ENCODE measurements at regions of chr17 and their contacts with region 1.

Region 1: GRCh38 chr17:59106463-59107305 is at the start of gene TRIM37:
- DNase-seq: peak; percentile 97 to 100 (median 98)
- ATAC-seq: peak; percentile 96
- H3K4me3 ChIP-seq: peak within 1 kb of the TSS; percentile 89 to 93
- H3K4me3 Mint-ChIP-seq: peak within 1 kb of the TSS; percentile 92
- H3K27ac ChIP-seq: peak within 1 kb of the TSS; percentile 87 to 88
- H3K27ac Mint-ChIP-seq: peak within 1 kb of the TSS; percentile 91
- H3K4me1 ChIP-seq: peaks cover 26% of the 10 kb centered on the region
- H3K4me1 Mint-ChIP-seq: peaks cover 38% of the 10 kb centered on the region
- H3K27me3 ChIP-seq: no peaks in the 10 kb centered on the region
- H3K27me3 Mint-ChIP-seq: no peaks in the 10 kb centered on the region
- CTCF ChIP-seq: no peak
- total RNA-seq, gene TRIM37: 17.7 to 20.9 TPM

Region 2: DNA sequence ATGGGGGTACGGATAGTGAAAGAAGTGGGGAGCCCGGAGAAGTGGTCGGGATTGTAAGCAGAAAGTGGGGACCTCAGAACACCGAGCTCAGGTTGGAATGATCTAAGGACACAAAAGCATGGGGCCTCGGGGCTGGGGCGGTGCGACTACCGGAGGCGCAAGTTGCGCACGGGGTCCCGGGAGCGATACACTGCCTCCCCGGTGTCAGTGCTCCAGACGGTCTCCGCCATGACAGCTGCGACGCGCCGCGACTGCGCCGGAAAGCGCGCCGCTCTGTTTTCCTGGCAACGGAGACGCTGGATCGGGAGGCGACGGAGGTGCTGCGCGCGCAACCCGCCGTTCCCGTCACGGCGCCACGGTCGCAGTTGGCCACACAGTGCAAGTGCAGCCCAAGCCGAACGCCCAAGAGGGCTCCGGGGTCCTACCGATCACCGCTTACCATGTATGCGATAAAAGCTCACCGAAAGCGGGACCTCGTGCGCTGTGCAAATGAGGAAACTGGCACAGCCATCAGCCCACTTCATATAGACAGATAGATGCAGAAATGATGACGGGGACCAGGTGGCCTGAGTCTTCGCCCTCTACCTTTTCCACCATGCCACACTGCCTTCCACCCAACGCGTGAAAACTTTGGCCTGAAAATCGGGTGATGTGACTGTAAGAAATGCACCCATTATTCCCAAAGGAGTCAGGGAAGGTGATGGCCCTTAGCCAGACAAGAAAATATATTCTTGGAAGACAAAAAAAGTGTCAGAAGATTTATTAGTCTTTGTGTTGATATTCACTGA is 887.5 kb before region 1 on chr17 and contains the start of gene MKS1:
- CTCF ChIA-PET with region 1: no interaction called
- POLR2A ChIA-PET with region 1: no interaction called
- intact Hi-C with region 1: loop called in 1 of 2 experiments (anchors 2 kb)
- DNase-seq: peak; percentile 92 to 97 (median 95)
- ATAC-seq: peak; percentile 97
- H3K4me3 ChIP-seq: peak within 1 kb of the TSS; percentile 63 to 91
- H3K4me3 Mint-ChIP-seq: peak within 1 kb of the TSS; percentile 87
- H3K27ac ChIP-seq: peak within 1 kb of the TSS; percentile 82 to 90
- H3K27ac Mint-ChIP-seq: peak within 1 kb of the TSS; percentile 93
- H3K4me1 ChIP-seq: peaks cover 14% of the 10 kb centered on the region
- H3K4me1 Mint-ChIP-seq: peaks cover 23% of the 10 kb centered on the region
- H3K27me3 ChIP-seq: no peaks in the 10 kb centered on the region
- H3K27me3 Mint-ChIP-seq: peaks cover 2% of the 10 kb centered on the region
- CTCF ChIP-seq: peak; percentile 67
- total RNA-seq, gene MKS1: 4.6 to 4.9 TPM

Region 3: DNA sequence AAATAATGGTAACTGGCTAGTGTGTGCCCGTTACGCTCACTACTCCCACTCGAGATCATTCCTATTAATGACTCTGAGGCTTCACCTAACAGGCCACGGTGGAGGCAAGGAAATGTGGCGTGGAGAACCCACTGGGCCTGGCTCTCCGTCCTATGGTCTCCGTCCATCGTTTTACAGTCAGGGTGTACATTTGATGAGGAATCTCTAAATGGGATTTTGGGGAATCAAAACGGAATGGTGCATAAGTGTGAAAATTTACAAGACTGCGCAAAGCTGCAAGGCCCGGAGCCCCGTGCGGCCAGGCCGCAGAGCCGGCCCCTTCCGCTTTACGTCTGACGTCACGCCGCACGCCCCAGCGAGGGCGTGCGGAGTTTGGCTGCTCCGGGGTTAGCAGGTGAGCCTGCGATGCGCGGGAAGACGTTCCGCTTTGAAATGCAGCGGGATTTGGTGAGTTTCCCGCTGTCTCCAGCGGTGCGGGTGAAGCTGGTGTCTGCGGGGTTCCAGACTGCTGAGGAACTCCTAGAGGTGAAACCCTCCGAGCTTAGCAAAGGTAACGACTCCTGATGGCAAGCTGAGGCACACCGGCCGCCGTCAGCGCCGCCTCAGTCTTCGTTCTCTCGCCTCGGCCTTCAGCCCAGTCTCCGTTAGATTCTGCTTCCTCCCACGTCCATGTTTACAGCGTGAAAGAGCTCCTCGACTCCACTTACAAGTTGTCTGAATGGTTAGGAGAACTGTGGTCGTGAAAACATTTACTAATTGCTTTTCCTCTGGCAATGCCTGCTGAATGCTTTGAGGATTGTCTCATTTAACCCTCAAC is 414.2 kb before region 1 on chr17 and contains the start of gene RAD51C:
- CTCF ChIA-PET with region 1: no interaction called
- POLR2A ChIA-PET with region 1: no interaction called
- intact Hi-C with region 1: loop called in 1 of 2 experiments (anchors 10 kb)
- DNase-seq: peak; percentile 67 to 93 (median 85)
- ATAC-seq: peak; percentile 98
- H3K4me3 ChIP-seq: peak within 1 kb of the TSS; percentile 72 to 86
- H3K4me3 Mint-ChIP-seq: peak within 1 kb of the TSS; percentile 91
- H3K27ac ChIP-seq: peak within 1 kb of the TSS; percentile 66 to 82
- H3K27ac Mint-ChIP-seq: peak within 1 kb of the TSS; percentile 89
- H3K4me1 ChIP-seq: peaks cover 17% of the 10 kb centered on the region
- H3K4me1 Mint-ChIP-seq: peaks cover 29% of the 10 kb centered on the region
- H3K27me3 ChIP-seq: no peaks in the 10 kb centered on the region
- H3K27me3 Mint-ChIP-seq: no peaks in the 10 kb centered on the region
- CTCF ChIP-seq: no peak
- total RNA-seq, gene RAD51C: 10.0 to 10.7 TPM

Region 4: GRCh38 chr17:58899065-58899590 is 207.6 kb before region 1 on chr17:
- CTCF ChIA-PET with region 1: no interaction called
- POLR2A ChIA-PET with region 1: no interaction called
- intact Hi-C with region 1: no loop called
- DNase-seq: no peak
- ATAC-seq: no peak
- H3K4me3 ChIP-seq: no peak overlapping the region
- H3K4me3 Mint-ChIP-seq: no peak overlapping the region
- H3K27ac ChIP-seq: no peak overlapping the region
- H3K27ac Mint-ChIP-seq: no peak overlapping the region
- H3K4me1 ChIP-seq: no peaks in the 10 kb centered on the region
- H3K4me1 Mint-ChIP-seq: no peaks in the 10 kb centered on the region
- H3K27me3 ChIP-seq: no peaks in the 10 kb centered on the region
- H3K27me3 Mint-ChIP-seq: peaks cover 18% of the 10 kb centered on the region
- CTCF ChIP-seq: no peak

Region 5: DNA sequence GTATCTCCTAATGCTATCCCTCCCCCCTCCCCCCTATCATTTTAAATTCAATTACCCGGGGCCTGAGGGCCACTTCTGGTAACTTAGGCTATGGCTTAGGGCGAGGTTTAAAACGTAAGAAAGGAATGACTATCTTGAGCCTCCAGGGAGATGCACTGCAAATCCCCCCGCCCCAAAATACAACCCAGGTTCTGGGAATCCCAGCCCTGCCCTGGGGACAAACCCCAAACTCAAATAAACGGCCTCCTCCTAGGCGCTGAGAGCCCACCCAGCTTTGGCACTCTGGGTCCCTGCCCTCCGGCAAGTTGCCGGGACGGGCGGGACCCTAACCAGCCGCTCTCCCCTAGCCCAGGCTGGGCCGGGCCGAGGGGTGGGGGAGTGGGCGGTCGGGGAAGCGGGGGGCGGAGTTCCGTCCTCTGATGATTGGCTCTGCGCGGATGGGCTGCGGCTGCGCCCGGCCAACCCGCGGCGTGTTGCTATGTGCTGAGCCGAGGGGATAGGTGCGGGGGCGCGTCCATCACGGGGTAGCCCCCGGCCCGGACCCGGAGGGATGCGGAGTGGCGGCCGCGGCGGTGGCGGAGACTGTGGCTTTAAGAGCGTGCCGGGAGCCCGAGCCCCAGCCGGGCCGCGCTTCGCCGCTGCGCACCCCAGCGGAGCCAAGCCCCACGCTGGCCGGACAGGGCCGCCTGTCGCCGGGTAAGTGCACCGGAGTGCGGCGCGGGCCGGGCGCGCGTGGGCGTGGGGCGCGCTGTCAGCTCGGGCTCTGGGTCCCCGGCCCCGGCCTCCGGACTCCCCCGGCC is 224.6 kb after region 1 on chr17 and contains the start of gene YPEL2:
- CTCF ChIA-PET with region 1: no interaction called
- POLR2A ChIA-PET with region 1: no interaction called
- intact Hi-C with region 1: loop called in 1 of 2 experiments (anchors 1 kb)
- DNase-seq: peak; percentile 68 to 94 (median 91)
- ATAC-seq: peak; percentile 85
- H3K4me3 ChIP-seq: peak within 1 kb of the TSS; percentile 49 to 86
- H3K4me3 Mint-ChIP-seq: peak within 1 kb of the TSS; percentile 94
- H3K27ac ChIP-seq: peak within 1 kb of the TSS; percentile 44 to 52
- H3K27ac Mint-ChIP-seq: peak within 1 kb of the TSS; percentile 94
- H3K4me1 ChIP-seq: peaks cover 64% of the 10 kb centered on the region
- H3K4me1 Mint-ChIP-seq: peaks cover 81% of the 10 kb centered on the region
- H3K27me3 ChIP-seq: no peaks in the 10 kb centered on the region
- H3K27me3 Mint-ChIP-seq: no peaks in the 10 kb centered on the region
- CTCF ChIP-seq: no peak
- total RNA-seq, gene YPEL2: 48.7 to 54.4 TPM

Region 6: GRCh38 chr17:59707114-59707970 is 600.7 kb after region 1 on chr17 and contains the starts of genes PTRH2 and VMP1:
- CTCF ChIA-PET with region 1: no interaction called
- POLR2A ChIA-PET with region 1: no interaction called
- intact Hi-C with region 1: loop called in 1 of 2 experiments (anchors 2 kb)
- DNase-seq: peak; percentile 72 to 97 (median 87)
- ATAC-seq: peak; percentile 93
- H3K4me3 ChIP-seq: peak within 1 kb of the TSS; percentile 72 to 80
- H3K4me3 Mint-ChIP-seq: peak within 1 kb of the TSS; percentile 95
- H3K27ac ChIP-seq: peak within 1 kb of the TSS; percentile 80 to 94
- H3K27ac Mint-ChIP-seq: peak within 1 kb of the TSS; percentile 97
- H3K4me1 ChIP-seq: peaks cover 36% of the 10 kb centered on the region
- H3K4me1 Mint-ChIP-seq: peaks cover 63% of the 10 kb centered on the region
- H3K27me3 ChIP-seq: no peaks in the 10 kb centered on the region
- H3K27me3 Mint-ChIP-seq: no peaks in the 10 kb centered on the region
- CTCF ChIP-seq: no peak
- total RNA-seq, gene PTRH2: 6.1 to 7.6 TPM
- total RNA-seq, gene VMP1: 56.8 to 66.2 TPM

Region 7: GRCh38 chr17:60599620-60600489 is 1493.2 kb after region 1 on chr17 and contains the start of gene PPM1D:
- CTCF ChIA-PET with region 1: no interaction called
- POLR2A ChIA-PET with region 1: no interaction called
- intact Hi-C with region 1: loop called in 1 of 2 experiments (anchors 5 kb)
- DNase-seq: peak; percentile 92 to 99 (median 98)
- ATAC-seq: peak; percentile 93
- H3K4me3 ChIP-seq: peak within 1 kb of the TSS; percentile 84 to 97
- H3K4me3 Mint-ChIP-seq: peak within 1 kb of the TSS; percentile 94
- H3K27ac ChIP-seq: peak within 1 kb of the TSS; percentile 76 to 96
- H3K27ac Mint-ChIP-seq: peak within 1 kb of the TSS; percentile 94
- H3K4me1 ChIP-seq: peaks cover 11% of the 10 kb centered on the region
- H3K4me1 Mint-ChIP-seq: peaks cover 38% of the 10 kb centered on the region
- H3K27me3 ChIP-seq: no peaks in the 10 kb centered on the region
- H3K27me3 Mint-ChIP-seq: no peaks in the 10 kb centered on the region
- CTCF ChIP-seq: no peak
- total RNA-seq, gene PPM1D: 21.0 to 21.1 TPM